Posterior vena cava (tissue), 2 donors: ENCODE measurements at regions of chrX and their contacts with region 1.

Region 1: GRCh38 chrX:96861218-96861617 is 22.5 kb upstream of the RPA4 start:
- DNase-seq: no peak

Region 2: GRCh38 chrX:95044331-95044730 is 1816.9 kb before region 1 on chrX:
- intact Hi-C with region 1: no loop called
- DNase-seq: no peak

Region 3: GRCh38 chrX:98231003-98231402 is 1369.8 kb after region 1 on chrX:
- intact Hi-C with region 1: loop called in 1 of 2 experiments (anchors 10 kb)
- DNase-seq: no peak